Endothelial cell of umbilical vein (primary cell): ENCODE measurements at regions of chr22 and their contacts with region 1.

Region 1: DNA sequence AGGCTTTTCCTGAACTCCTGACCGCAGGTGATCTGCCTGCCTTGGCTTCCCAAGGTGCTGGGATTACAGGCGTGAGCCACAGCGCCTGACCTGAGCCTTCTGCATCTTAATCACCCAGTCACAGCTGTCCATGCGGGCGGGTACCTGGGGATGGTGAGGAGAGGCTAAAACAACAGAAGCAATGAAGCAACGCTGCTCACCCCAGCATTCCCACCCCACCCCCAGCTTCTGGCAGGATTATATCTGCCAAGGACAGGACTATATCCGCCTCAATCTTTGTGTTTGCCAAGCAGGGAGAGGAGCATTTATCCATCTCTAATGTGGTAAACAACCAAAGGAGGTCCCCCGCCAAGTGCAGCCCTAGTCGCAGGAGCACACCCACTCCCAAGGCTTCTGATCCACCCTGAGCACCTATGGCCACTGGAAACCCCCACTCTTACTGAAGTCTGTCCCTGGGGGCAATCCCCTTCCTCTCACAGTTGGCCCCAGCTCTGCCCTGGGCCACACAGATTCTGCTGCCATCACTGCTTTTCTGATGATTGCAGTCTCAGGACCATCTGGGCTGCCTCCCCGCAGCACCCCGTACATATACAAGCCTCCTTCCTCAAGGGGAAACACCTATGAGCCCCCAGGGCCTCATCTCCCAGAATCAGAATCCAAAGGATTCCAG is 8.8 kb upstream of the LGALS2 start:
- DNase-seq: no peak
- H3K4me3 ChIP-seq: no peak overlapping the region
- H3K27ac ChIP-seq: no peak overlapping the region
- H3K4me1 ChIP-seq: no peaks in the 10 kb centered on the region
- H3K27me3 ChIP-seq: peaks cover 0 to 1% of the 10 kb centered on the region in 2 experiments
- CTCF ChIP-seq: no peak
- POLR2A ChIP-seq: no peak

Region 2: GRCh38 chr22:37316875-37317371 is 271.8 kb before region 1 on chr22:
- CTCF ChIA-PET with region 1: interaction called, 3 read pairs
- POLR2A ChIA-PET with region 1: no interaction called
- dilution Hi-C with region 1: no loop called
- intact Hi-C with region 1: loop called (anchors 1 kb)
- DNase-seq: peak; percentile 82
- H3K4me3 ChIP-seq: no peak overlapping the region
- H3K27ac ChIP-seq: no peak overlapping the region
- H3K4me1 ChIP-seq: peaks cover 6% of the 10 kb centered on the region
- H3K27me3 ChIP-seq: no peaks in the 10 kb centered on the region
- CTCF ChIP-seq: peak; percentile 93
- POLR2A ChIP-seq: no peak

Region 3: GRCh38 chr22:37498289-37498909 is 90.3 kb before region 1 on chr22:
- CTCF ChIA-PET with region 1: interaction called, 4 read pairs
- POLR2A ChIA-PET with region 1: no interaction called
- dilution Hi-C with region 1: no loop called
- intact Hi-C with region 1: loop called (anchors 1 kb)
- DNase-seq: peak; percentile 20
- H3K4me3 ChIP-seq: no peak overlapping the region
- H3K27ac ChIP-seq: no peak overlapping the region
- H3K4me1 ChIP-seq: peaks cover 51% of the 10 kb centered on the region
- H3K27me3 ChIP-seq: no peaks in the 10 kb centered on the region
- CTCF ChIP-seq: peak; percentile 51 to 72
- POLR2A ChIP-seq: no peak

Region 4: GRCh38 chr22:37544955-37545699 is 43.6 kb before region 1 on chr22:
- CTCF ChIA-PET with region 1: interaction called, 437 read pairs
- POLR2A ChIA-PET with region 1: interaction called, 6 read pairs
- dilution Hi-C with region 1: no loop called
- intact Hi-C with region 1: loop called (anchors 1 kb)
- DNase-seq: peak; percentile 80
- H3K4me3 ChIP-seq: no peak overlapping the region
- H3K27ac ChIP-seq: peak overlapping the region; percentile 91
- H3K4me1 ChIP-seq: peaks cover 22% of the 10 kb centered on the region
- H3K27me3 ChIP-seq: no peaks in the 10 kb centered on the region
- CTCF ChIP-seq: peak; percentile 88 to 91
- POLR2A ChIP-seq: no peak

Region 5: GRCh38 chr22:37566903-37567820 is 21.5 kb before region 1 on chr22:
- CTCF ChIA-PET with region 1: interaction called, 84 read pairs
- POLR2A ChIA-PET with region 1: no interaction called
- dilution Hi-C with region 1: no loop called
- intact Hi-C with region 1: loop called (anchors 1 kb)
- DNase-seq: peak; percentile 58
- H3K4me3 ChIP-seq: no peak overlapping the region
- H3K27ac ChIP-seq: peak overlapping the region; percentile 0
- H3K4me1 ChIP-seq: peaks cover 43% of the 10 kb centered on the region
- H3K27me3 ChIP-seq: no peaks in the 10 kb centered on the region
- CTCF ChIP-seq: peak; percentile 83 to 93
- POLR2A ChIP-seq: peak; percentile 2

Region 6: GRCh38 chr22:37601540-37602442 is 13.1 kb after region 1 on chr22:
- CTCF ChIA-PET with region 1: interaction called, 92 read pairs
- POLR2A ChIA-PET with region 1: no interaction called
- dilution Hi-C with region 1: no loop called
- intact Hi-C with region 1: no loop called
- DNase-seq: peak; percentile 42
- H3K4me3 ChIP-seq: no peak overlapping the region
- H3K27ac ChIP-seq: no peak overlapping the region
- H3K4me1 ChIP-seq: no peaks in the 10 kb centered on the region
- H3K27me3 ChIP-seq: peaks cover 0 to 13% of the 10 kb centered on the region in 2 experiments
- CTCF ChIP-seq: no peak
- POLR2A ChIP-seq: no peak

Region 7: DNA sequence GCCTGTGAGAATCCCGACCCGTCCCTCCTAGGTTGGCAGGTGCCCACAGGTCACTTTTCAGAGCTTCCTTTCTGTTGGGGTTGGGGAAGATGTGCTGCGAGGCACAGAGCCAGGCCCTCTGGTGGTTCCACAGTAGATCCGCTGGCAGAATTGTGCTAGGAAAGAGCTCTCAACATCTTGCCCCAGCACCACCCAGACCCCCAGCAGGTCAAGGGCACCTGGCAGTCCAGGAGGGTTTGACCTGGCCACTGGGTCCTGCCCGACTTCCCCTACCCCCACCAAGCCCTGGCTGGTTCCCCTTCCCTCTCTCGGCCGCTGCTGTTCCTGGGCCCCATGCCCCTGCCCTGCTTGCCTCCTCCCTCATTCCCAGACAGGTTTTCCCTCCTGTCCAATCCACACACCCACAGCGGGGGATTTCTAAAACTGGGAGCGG is 192.8 kb after region 1 on chr22:
- CTCF ChIA-PET with region 1: no interaction called
- POLR2A ChIA-PET with region 1: no interaction called
- dilution Hi-C with region 1: no loop called
- intact Hi-C with region 1: no loop called
- DNase-seq: no peak
- H3K4me3 ChIP-seq: no peak overlapping the region
- H3K27ac ChIP-seq: no peak overlapping the region
- H3K4me1 ChIP-seq: peaks cover 15% of the 10 kb centered on the region
- H3K27me3 ChIP-seq: no peaks in the 10 kb centered on the region
- CTCF ChIP-seq: peak; percentile 21 to 41
- POLR2A ChIP-seq: no peak